ENCODE measurements at regions of chr12 and their contacts with region 1.

Region 1: DNA sequence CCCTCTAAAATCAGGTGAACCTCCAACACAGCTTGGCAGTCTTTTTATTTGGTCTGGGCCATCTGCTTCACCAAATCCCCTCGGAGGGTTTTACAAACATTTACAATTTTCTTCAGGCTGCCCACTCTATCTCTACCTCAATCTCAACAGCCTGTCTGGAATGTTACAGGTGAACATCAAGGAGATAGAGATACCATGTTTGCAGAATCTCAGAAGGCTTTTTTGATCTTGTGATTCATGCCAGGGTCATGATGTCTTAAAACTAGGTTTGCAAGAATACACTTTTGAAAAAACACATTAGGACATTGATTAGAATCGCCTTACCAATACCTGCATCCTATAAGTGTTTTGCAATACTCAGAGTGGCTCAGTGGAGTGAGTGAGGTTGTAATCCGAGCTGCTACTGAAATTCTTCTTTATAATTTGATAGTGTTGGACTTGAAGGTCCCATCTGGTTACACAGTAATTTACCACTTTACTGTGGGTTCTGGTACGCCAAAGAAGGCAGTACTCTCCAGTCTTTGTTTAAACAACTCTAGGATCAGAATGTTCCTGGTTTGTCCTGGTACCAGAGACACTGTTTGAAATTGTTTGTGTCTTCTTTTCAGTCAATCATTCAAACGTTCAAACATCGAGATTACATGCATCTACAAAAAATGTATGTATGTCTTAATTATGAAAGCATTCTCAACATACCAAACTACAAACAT is 51.1 kb upstream of the AMN1 start:
- DNase-seq: no peak
- ATAC-seq: no peak
- H3K4me3 ChIP-seq: no peak overlapping the region
- H3K4me3 Mint-ChIP-seq: no peak overlapping the region
- H3K27ac ChIP-seq: no peak overlapping the region
- H3K27ac Mint-ChIP-seq: no peak overlapping the region
- H3K4me1 ChIP-seq: peaks cover 3 to 8% of the 10 kb centered on the region in 2 donors
- H3K4me1 Mint-ChIP-seq: peaks cover 15% of the 10 kb centered on the region
- H3K27me3 ChIP-seq: no peaks in the 10 kb centered on the region
- H3K27me3 Mint-ChIP-seq: no peaks in the 10 kb centered on the region
- CTCF ChIP-seq: no peak

Region 2: GRCh38 chr12:31742891-31743290 is 37.0 kb before region 1 on chr12:
- CTCF ChIA-PET with region 1: no interaction called
- POLR2A ChIA-PET with region 1: no interaction called
- intact Hi-C with region 1: loop called (anchors 5 kb)
- DNase-seq: peak; percentile 86
- ATAC-seq: peak; percentile 64
- H3K4me3 ChIP-seq: peak overlapping the region in 1 of 5 experiments; percentile 21
- H3K4me3 Mint-ChIP-seq: peak overlapping the region; percentile 35
- H3K27ac ChIP-seq: peak overlapping the region; percentile 2 to 68
- H3K27ac Mint-ChIP-seq: peak overlapping the region; percentile 69
- H3K4me1 ChIP-seq: peaks cover 80 to 81% of the 10 kb centered on the region in 2 donors
- H3K4me1 Mint-ChIP-seq: peaks cover 77% of the 10 kb centered on the region
- H3K27me3 ChIP-seq: no peaks in the 10 kb centered on the region
- H3K27me3 Mint-ChIP-seq: no peaks in the 10 kb centered on the region
- CTCF ChIP-seq: no peak

Region 3: DNA sequence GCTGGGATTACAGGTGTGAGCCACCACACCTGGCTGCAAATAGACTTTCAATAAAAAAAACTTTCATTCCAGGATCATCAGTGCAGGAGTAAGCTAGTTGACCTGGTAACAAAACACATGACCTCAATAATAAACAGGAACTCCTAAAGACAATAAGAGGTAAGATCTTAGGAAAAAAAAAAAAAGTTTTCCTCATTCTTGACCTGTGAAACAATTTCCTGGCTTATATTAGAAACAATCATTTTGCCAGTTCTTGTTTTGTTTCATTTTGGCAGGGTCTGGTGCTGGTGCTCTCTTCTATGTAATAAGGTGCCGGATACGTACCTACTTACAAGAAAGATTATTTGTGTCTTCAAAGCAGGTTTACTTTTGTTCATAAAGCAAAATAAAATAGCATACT is 39.5 kb after region 1 on chr12:
- CTCF ChIA-PET with region 1: no interaction called
- POLR2A ChIA-PET with region 1: no interaction called
- intact Hi-C with region 1: no loop called
- DNase-seq: no peak
- ATAC-seq: no peak
- H3K4me3 ChIP-seq: no peak overlapping the region
- H3K4me3 Mint-ChIP-seq: no peak overlapping the region
- H3K27ac ChIP-seq: no peak overlapping the region
- H3K27ac Mint-ChIP-seq: no peak overlapping the region
- H3K4me1 ChIP-seq: peaks cover 12 to 16% of the 10 kb centered on the region in 2 donors
- H3K4me1 Mint-ChIP-seq: peaks cover 39% of the 10 kb centered on the region
- H3K27me3 ChIP-seq: no peaks in the 10 kb centered on the region
- H3K27me3 Mint-ChIP-seq: no peaks in the 10 kb centered on the region
- CTCF ChIP-seq: no peak